HEK293 (cell line): ENCODE measurements at regions of chr1 and their contacts with region 1.

Region 1: GRCh38 chr1:202998836-202999750 is 8.1 kb upstream of the TMEM183A start:
- H3K4me3 ChIP-seq: no peak overlapping the region
- H3K27ac ChIP-seq: no peak overlapping the region
- H3K4me1 ChIP-seq: no peaks in the 10 kb centered on the region
- CTCF ChIP-seq: peak; percentile 48

Region 2: GRCh38 chr1:202974856-202975255 is 24.2 kb before region 1 on chr1:
- CTCF ChIA-PET with region 1: interaction called, 30 read pairs
- POLR2A ChIA-PET with region 1: no interaction called
- H3K4me3 ChIP-seq: no peak overlapping the region
- H3K27ac ChIP-seq: no peak overlapping the region
- H3K4me1 ChIP-seq: no peaks in the 10 kb centered on the region
- CTCF ChIP-seq: no peak